Right ventricle myocardium superior (tissue), 1 donor: ENCODE measurements at regions of chr3 and their contacts with region 1.

Region 1: GRCh38 chr3:112814266-112814665 is 32.4 kb downstream of the CD200R1L start:
- DNase-seq: no peak
- ATAC-seq: peak; percentile 51

Region 2: GRCh38 chr3:112642912-112643506 is 171.3 kb before region 1 on chr3:
- intact Hi-C with region 1: loop called (anchors 5 kb)
- DNase-seq: peak; percentile 88
- ATAC-seq: peak; percentile 83

Region 3: DNA sequence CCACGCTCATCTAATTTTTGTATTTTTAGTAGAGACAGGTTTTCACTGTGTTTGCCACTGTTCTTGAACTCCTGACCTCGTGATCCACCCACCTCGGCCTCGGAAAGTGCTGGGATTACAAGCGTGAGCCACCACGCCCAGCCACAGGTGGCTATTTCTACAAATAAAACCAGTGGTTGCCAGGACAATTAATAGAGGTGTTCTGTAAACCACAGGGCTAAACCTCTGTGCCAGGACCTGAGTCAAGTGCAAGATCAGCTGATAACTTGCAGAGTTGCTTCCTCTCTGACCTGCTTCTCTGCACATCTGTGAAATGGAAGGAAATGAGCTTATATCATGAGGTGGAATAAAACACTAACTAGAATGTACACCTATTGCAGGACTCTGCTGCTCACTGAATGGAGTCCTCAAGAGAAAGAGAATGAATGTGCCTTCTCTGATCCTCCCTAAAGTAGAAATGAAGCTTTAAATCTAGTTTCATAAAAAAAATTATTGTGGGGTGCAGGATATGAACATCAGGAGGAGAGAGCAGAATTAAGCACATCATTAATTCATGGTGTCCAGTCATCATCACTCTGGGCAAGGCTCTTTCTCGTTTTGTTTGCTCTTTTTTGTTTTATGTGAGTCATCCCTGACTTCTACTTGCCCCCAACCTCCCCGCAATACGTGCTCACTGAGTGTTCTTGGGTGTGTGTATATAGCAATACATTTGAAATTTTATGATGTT is 40.2 kb before region 1 on chr3:
- intact Hi-C with region 1: loop called (anchors 5 kb)
- DNase-seq: no peak
- ATAC-seq: no peak